Activated B cell treated with CpG ODN at 0.5 μM for 24 hours (primary cell): ENCODE measurements at regions of chr2 and their contacts with region 1.

Region 1: DNA sequence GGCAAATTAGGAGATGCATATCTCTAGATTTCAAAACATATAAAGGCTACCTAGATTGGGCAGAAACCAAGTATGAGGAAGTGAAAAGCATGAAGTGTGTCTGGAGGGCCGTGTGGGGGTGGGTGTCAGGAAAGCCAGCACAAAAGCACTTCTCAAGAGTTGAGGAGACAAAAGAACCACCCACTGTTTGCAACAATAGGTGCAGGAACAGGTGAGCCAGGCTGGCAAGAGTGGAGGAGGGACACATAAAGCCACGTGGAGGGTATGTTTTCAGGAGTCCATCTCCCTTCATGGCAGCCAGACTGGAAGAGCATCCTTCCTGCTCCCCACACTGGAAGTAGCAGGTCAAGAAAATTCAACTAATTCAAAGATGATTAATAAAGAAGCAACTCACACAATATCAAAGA is 96.4 kb downstream of the CERS6 start:
- DNase-seq: no peak
- ATAC-seq: peak; percentile 84
- H3K4me3 Mint-ChIP-seq: peak overlapping the region; percentile 19
- H3K27ac Mint-ChIP-seq: peak overlapping the region; percentile 47
- H3K4me1 Mint-ChIP-seq: peaks cover 24% of the 10 kb centered on the region
- H3K27me3 Mint-ChIP-seq: no peaks in the 10 kb centered on the region
- CTCF ChIP-seq: no peak

Region 2: DNA sequence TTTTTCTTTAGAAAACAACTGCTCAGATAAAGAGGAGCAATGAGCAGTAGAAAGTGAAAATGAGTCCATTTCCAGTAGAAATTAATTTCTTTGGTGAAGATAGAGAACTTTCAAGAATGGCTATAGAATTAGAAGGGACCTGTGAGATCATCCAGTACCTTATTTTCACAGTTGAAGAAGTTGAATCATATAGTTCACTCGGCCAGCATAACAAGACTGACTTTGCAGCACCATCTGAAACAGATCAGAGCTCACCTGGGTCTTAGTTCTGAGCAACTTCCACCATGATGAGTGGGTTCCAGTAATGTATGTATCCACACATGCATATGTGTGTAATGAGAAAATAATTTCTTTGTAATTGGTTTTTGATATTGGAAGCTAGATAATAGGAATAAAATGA is 37.8 kb before region 1 on chr2:
- CTCF ChIA-PET with region 1: no interaction called
- POLR2A ChIA-PET with region 1: no interaction called
- intact Hi-C with region 1: loop called (anchors 5 kb)
- DNase-seq: no peak
- ATAC-seq: no peak
- H3K4me3 Mint-ChIP-seq: no peak overlapping the region
- H3K27ac Mint-ChIP-seq: no peak overlapping the region
- H3K4me1 Mint-ChIP-seq: peaks cover 10% of the 10 kb centered on the region
- H3K27me3 Mint-ChIP-seq: no peaks in the 10 kb centered on the region
- CTCF ChIP-seq: no peak

Region 3: DNA sequence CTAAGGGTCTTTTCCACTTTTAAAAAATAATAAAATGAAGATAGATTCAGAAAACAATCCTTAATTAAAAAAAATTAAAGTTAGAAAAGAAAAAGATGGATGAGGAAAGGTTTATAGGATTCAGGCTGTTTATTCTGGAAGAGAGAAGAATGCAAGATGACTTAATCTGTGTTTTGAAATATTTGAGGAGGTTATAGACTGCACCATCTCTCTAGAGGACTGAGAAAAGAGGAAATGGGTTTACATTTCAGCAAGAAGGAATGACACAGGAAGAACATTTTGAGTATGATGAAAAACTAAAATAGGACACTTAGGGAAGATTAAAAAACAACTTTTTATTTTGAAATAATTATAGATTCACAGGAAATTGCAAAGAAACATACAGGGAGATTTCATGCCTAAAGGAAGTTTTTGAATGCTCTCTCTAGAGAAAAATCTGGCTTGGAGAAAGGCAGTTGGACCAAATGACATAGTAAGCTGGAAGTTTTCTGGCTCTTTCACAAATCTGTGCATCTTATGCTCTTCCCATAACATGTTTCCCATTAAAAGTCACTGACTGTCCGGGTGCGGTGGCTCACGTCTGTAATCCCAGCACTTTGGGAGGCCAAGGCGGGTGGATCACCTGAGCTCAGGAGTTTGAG is 21.4 kb before region 1 on chr2:
- CTCF ChIA-PET with region 1: no interaction called
- POLR2A ChIA-PET with region 1: no interaction called
- intact Hi-C with region 1: no loop called
- DNase-seq: no peak
- ATAC-seq: peak; percentile 61
- H3K4me3 Mint-ChIP-seq: peak overlapping the region; percentile 65
- H3K27ac Mint-ChIP-seq: peak overlapping the region; percentile 82
- H3K4me1 Mint-ChIP-seq: peaks cover 67% of the 10 kb centered on the region
- H3K27me3 Mint-ChIP-seq: no peaks in the 10 kb centered on the region
- CTCF ChIP-seq: no peak

Region 4: GRCh38 chr2:168566974-168567665 is 14.7 kb after region 1 on chr2:
- CTCF ChIA-PET with region 1: no interaction called
- POLR2A ChIA-PET with region 1: no interaction called
- intact Hi-C with region 1: loop called (anchors 1 kb)
- DNase-seq: no peak
- ATAC-seq: no peak
- H3K4me3 Mint-ChIP-seq: no peak overlapping the region
- H3K27ac Mint-ChIP-seq: no peak overlapping the region
- H3K4me1 Mint-ChIP-seq: peaks cover 22% of the 10 kb centered on the region
- H3K27me3 Mint-ChIP-seq: no peaks in the 10 kb centered on the region
- CTCF ChIP-seq: no peak

Region 5: GRCh38 chr2:170394641-170395387 is 1842.4 kb after region 1 on chr2:
- CTCF ChIA-PET with region 1: no interaction called
- POLR2A ChIA-PET with region 1: no interaction called
- intact Hi-C with region 1: no loop called
- DNase-seq: no peak
- ATAC-seq: no peak
- H3K4me3 Mint-ChIP-seq: no peak overlapping the region
- H3K27ac Mint-ChIP-seq: no peak overlapping the region
- H3K4me1 Mint-ChIP-seq: no peaks in the 10 kb centered on the region
- H3K27me3 Mint-ChIP-seq: peaks cover 12% of the 10 kb centered on the region
- CTCF ChIP-seq: no peak